Activated naive CD4-positive, alpha-beta T cell treated with anti-CD3 and anti-CD28 coated beads for 36 hours (primary cell): ENCODE measurements at regions of chr22 and their contacts with region 1.

Region 1: GRCh38 chr22:37896181-37896592 is 9.9 kb upstream of the MICALL1 start:
- DNase-seq: peak; percentile 79
- H3K4me3 Mint-ChIP-seq: no peak overlapping the region
- H3K27ac Mint-ChIP-seq: peak overlapping the region; percentile 88
- H3K4me1 Mint-ChIP-seq: peaks cover 23% of the 10 kb centered on the region
- H3K27me3 Mint-ChIP-seq: no peaks in the 10 kb centered on the region

Region 2: GRCh38 chr22:37953437-37954179 is 57.4 kb after region 1 on chr22 and contains the starts of genes C22orf23 and POLR2F:
- CTCF ChIA-PET with region 1: no interaction called
- intact Hi-C with region 1: loop called (anchors 2 kb)
- DNase-seq: peak; percentile 98
- H3K4me3 Mint-ChIP-seq: peak within 1 kb of the TSS; percentile 98
- H3K27ac Mint-ChIP-seq: peak within 1 kb of the TSS; percentile 79
- H3K4me1 Mint-ChIP-seq: peaks cover 31% of the 10 kb centered on the region
- H3K27me3 Mint-ChIP-seq: peaks cover 5% of the 10 kb centered on the region
- total RNA-seq, gene C22orf23: not detected
- total RNA-seq, gene POLR2F: 70.1 to 70.6 TPM

Region 3: DNA sequence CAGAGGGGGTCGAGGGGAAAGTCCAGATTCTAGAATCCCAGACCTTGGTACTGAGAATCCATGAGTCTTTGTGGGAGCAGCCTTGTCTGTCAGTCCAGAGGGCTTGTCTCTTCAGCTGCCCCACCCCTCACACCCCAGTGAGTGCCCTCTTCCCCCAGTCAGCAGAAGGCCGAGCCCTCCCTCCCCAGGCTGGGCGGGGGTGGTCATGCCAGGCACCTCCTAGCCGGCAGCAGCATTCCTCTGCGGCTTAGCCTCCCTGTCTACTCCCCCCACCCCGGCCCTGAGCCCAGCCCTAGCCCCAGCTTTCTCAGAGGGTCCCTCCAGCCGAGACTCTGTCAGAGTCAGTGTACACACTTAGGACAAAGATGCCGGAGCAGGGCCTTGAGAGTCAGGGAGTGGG is 83.6 kb after region 1 on chr22:
- CTCF ChIA-PET with region 1: no interaction called
- intact Hi-C with region 1: no loop called
- DNase-seq: no peak
- H3K4me3 Mint-ChIP-seq: no peak overlapping the region
- H3K27ac Mint-ChIP-seq: no peak overlapping the region
- H3K4me1 Mint-ChIP-seq: no peaks in the 10 kb centered on the region
- H3K27me3 Mint-ChIP-seq: no peaks in the 10 kb centered on the region